Activated CD8-positive, alpha-beta T cell treated with anti-CD3 and anti-CD28 coated beads for 36 hours (primary cell): ENCODE measurements at regions of chr3 and their contacts with region 1.

Region 1: DNA sequence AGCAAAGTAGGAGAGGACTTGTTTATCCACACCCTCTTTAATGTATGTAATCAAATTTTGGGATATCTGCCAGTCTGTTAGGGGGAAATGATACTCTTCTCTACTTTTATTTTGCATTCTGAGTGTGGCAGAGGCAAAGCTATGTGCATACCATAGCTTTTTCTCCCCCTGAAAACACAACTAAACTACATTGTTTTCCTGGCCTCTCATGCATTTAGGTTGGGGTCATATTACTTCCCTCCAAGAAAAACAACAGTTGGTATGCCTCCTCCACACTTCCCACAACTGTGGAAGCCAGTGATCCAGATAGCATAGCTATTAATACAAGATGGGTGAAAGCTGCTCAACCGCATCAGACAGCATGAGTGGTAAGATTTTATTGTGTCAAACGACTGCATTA is 6.9 kb downstream of the RPL15 start:
- DNase-seq: no peak
- ATAC-seq: no peak
- H3K4me3 Mint-ChIP-seq: no peak overlapping the region
- H3K27ac Mint-ChIP-seq: no peak overlapping the region
- H3K4me1 Mint-ChIP-seq: peaks cover 18% of the 10 kb centered on the region
- H3K27me3 Mint-ChIP-seq: no peaks in the 10 kb centered on the region
- CTCF ChIP-seq: no peak

Region 2: GRCh38 chr3:23739536-23739935 is 184.2 kb before region 1 on chr3:
- CTCF ChIA-PET with region 1: no interaction called
- POLR2A ChIA-PET with region 1: no interaction called
- intact Hi-C with region 1: no loop called
- DNase-seq: no peak
- ATAC-seq: no peak
- H3K4me3 Mint-ChIP-seq: no peak overlapping the region
- H3K27ac Mint-ChIP-seq: no peak overlapping the region
- H3K4me1 Mint-ChIP-seq: peaks cover 18% of the 10 kb centered on the region
- H3K27me3 Mint-ChIP-seq: peaks cover 11% of the 10 kb centered on the region
- CTCF ChIP-seq: no peak

Region 3: DNA sequence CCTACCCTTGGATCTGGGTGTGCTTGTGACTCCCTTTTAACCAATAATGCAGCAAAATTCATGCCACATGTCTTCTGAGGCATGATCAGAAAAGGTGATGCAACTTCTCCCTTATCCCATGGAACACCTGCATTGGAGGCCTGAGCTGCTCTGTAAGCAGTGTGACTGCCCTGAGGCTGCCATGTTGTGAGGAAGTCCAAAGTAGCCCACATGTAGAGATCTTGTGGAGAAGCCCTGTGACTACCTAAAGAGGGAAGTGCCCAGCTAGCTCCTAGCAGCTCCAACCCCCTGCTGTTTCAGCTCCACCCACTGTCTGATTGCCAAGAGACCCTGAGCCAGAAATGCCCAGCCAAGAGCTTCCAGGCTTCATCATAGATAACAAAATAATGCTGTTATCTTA is 14.9 kb after region 1 on chr3:
- CTCF ChIA-PET with region 1: interaction called, 4 read pairs
- POLR2A ChIA-PET with region 1: interaction called, 28 read pairs
- intact Hi-C with region 1: no loop called
- DNase-seq: no peak
- ATAC-seq: no peak
- H3K4me3 Mint-ChIP-seq: no peak overlapping the region
- H3K27ac Mint-ChIP-seq: no peak overlapping the region
- H3K4me1 Mint-ChIP-seq: no peaks in the 10 kb centered on the region
- H3K27me3 Mint-ChIP-seq: peaks cover 4% of the 10 kb centered on the region
- CTCF ChIP-seq: no peak